HCT116 (cell line): ENCODE measurements at regions of chr16 and their contacts with region 1.

Region 1: GRCh38 chr16:31472709-31473203 is 804 bp downstream of the TGFB1I1 start:
- DNase-seq: peak; percentile 90
- ATAC-seq: peak; percentile 89
- H3K4me3 ChIP-seq: peak overlapping the region; percentile 66 to 72
- H3K27ac ChIP-seq: peak overlapping the region; percentile 78
- H3K4me1 ChIP-seq: peaks cover 11 to 34% of the 10 kb centered on the region in 2 experiments
- H3K27me3 ChIP-seq: no peaks in the 10 kb centered on the region
- CTCF ChIP-seq: peak; percentile 80 to 98 (median 86)
- POLR2A ChIP-seq: no peak
- RAD21 ChIP-seq: peak; percentile 67

Region 2: GRCh38 chr16:31696968-31697743 is 224.4 kb after region 1 on chr16:
- CTCF ChIA-PET with region 1: no interaction called
- POLR2A ChIA-PET with region 1: no interaction called
- RAD21 ChIA-PET with region 1: no interaction called
- intact Hi-C with region 1: loop called (anchors 5 kb)
- DNase-seq: peak; percentile 43
- ATAC-seq: peak; percentile 26; the same call in 1 of the 2 replicates
- H3K4me3 ChIP-seq: no peak overlapping the region
- H3K27ac ChIP-seq: no peak overlapping the region
- H3K4me1 ChIP-seq: peaks cover 8 to 15% of the 10 kb centered on the region in 2 experiments; a peak in 3 of 4 replicates
- H3K27me3 ChIP-seq: no peaks in the 10 kb centered on the region
- CTCF ChIP-seq: peak; percentile 65 to 78 (median 71)
- POLR2A ChIP-seq: no peak
- RAD21 ChIP-seq: peak; percentile 86